PC-3 (cell line): ENCODE measurements at regions of chr6 and their contacts with region 1.

Region 1: GRCh38 chr6:15608396-15608795 is 54.4 kb downstream of the DTNBP1 start:
- DNase-seq: peak; percentile 81
- ATAC-seq: peak; percentile 100
- H3K4me3 ChIP-seq: no peak overlapping the region
- H3K27ac ChIP-seq: peak overlapping the region; percentile 4; the same call in 1 of the 2 replicates
- H3K4me1 ChIP-seq: peaks cover 7% of the 10 kb centered on the region
- H3K27me3 ChIP-seq: no peaks in the 10 kb centered on the region
- CTCF ChIP-seq: no peak

Region 2: GRCh38 chr6:17138033-17138432 is 1529.6 kb after region 1 on chr6:
- CTCF ChIA-PET with region 1: no interaction called
- POLR2A ChIA-PET with region 1: interaction called, 22 read pairs
- intact Hi-C with region 1: no loop called
- DNase-seq: no peak
- ATAC-seq: no peak
- H3K4me3 ChIP-seq: no peak overlapping the region
- H3K27ac ChIP-seq: no peak overlapping the region
- H3K4me1 ChIP-seq: no peaks in the 10 kb centered on the region
- H3K27me3 ChIP-seq: peaks cover 15% of the 10 kb centered on the region; the same call in 1 of the 2 replicates
- CTCF ChIP-seq: no peak